ENCODE measurements at regions of chr7 and their contacts with region 1.

Region 1: DNA sequence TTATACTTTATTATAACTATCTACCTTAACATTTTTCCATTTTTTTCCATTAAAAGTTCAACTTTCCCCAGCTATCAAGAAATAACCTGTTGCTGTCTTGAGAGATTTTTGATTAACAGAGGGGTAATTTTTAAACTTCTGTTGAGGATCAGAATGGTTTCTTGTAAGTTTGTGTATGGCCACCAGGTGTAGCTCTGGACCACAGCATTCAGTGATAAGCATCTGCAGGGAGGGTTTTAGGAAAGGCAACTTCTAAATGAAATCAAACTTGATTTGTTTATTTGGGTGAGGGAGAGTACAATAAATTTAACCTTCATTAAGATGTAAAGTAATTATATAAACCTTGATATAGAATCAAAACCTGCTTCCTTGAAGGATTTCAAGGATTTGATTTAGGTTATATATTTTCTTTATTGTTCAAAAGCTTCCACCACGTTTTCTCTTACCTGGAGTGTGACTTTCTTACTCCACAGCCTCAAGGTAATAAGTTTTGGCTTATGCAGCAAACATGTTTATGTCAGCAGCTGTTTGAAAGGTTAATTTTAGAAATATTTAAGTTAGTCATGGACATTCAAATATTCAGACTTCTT is 153.3 kb downstream of the STK31 start:
- DNase-seq: peak; percentile 63
- ATAC-seq: peak; percentile 74
- H3K4me3 ChIP-seq: no peak overlapping the region
- H3K27ac ChIP-seq: no peak overlapping the region
- H3K4me1 ChIP-seq: peaks cover 9% of the 10 kb centered on the region; the same call in 1 of the 2 replicates
- H3K27me3 ChIP-seq: no peaks in the 10 kb centered on the region
- CTCF ChIP-seq: peak; percentile 80

Region 2: GRCh38 chr7:23570592-23571200 is 292.6 kb before region 1 on chr7:
- CTCF ChIA-PET with region 1: no interaction called
- POLR2A ChIA-PET with region 1: no interaction called
- intact Hi-C with region 1: loop called (anchors 5 kb)
- DNase-seq: peak; percentile 86
- ATAC-seq: peak; percentile 99
- H3K4me3 ChIP-seq: no peak overlapping the region
- H3K27ac ChIP-seq: no peak overlapping the region
- H3K4me1 ChIP-seq: no peaks in the 10 kb centered on the region
- H3K27me3 ChIP-seq: no peaks in the 10 kb centered on the region
- CTCF ChIP-seq: peak; percentile 93

Region 3: GRCh38 chr7:24290004-24290641 is 426.8 kb after region 1 on chr7:
- CTCF ChIA-PET with region 1: no interaction called
- POLR2A ChIA-PET with region 1: no interaction called
- intact Hi-C with region 1: loop called (anchors 10 kb)
- DNase-seq: peak; percentile 71
- ATAC-seq: peak; percentile 92
- H3K4me3 ChIP-seq: no peak overlapping the region
- H3K27ac ChIP-seq: no peak overlapping the region
- H3K4me1 ChIP-seq: no peaks in the 10 kb centered on the region
- H3K27me3 ChIP-seq: peaks cover 59% of the 10 kb centered on the region
- CTCF ChIP-seq: peak; percentile 64

Region 4: DNA sequence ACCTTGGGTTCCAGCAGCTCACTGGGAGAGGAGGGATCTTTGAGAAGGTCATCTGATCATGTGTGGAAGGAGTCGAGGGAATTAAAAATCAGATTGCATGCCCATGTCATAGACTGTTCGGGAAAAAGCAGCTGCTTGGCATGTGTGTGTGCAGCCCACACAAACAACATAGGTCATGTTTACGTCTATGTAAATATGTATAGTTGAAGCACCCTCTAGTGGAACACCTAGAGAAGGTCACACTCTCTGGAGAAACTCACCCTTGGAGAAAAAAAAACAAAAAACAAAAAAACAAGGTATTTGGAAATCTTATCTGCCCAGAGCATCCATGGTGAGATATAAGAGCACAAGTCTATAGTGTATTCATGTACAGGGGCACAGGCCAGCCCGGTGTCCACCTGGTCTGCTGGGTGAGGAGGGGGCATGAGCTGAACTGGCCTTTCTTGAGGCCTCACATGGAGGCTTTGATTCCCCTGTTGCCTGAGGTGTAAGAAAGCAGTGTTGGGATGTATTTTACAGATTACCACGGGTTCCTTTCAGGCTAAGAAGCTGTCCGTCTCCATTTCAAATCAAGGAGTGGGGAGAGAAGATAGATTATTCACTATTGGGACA is 518.7 kb after region 1 on chr7:
- CTCF ChIA-PET with region 1: no interaction called
- POLR2A ChIA-PET with region 1: no interaction called
- intact Hi-C with region 1: loop called (anchors 1 kb)
- DNase-seq: peak; percentile 47
- ATAC-seq: peak; percentile 66
- H3K4me3 ChIP-seq: no peak overlapping the region
- H3K27ac ChIP-seq: no peak overlapping the region
- H3K4me1 ChIP-seq: peaks cover 10% of the 10 kb centered on the region; the same call in 1 of the 2 replicates
- H3K27me3 ChIP-seq: peaks cover 4% of the 10 kb centered on the region; the same call in 1 of the 2 replicates
- CTCF ChIP-seq: peak; percentile 71